ENCODE measurements at regions of chr19 and their contacts with region 1.

Region 1: GRCh38 chr19:57389730-57390598 is at the start of gene ZNF548:
- DNase-seq: peak; percentile 96
- ATAC-seq: peak; percentile 98
- H3K4me3 Mint-ChIP-seq: peak within 1 kb of the TSS; percentile 94
- H3K27ac Mint-ChIP-seq: peak within 1 kb of the TSS; percentile 91
- H3K4me1 Mint-ChIP-seq: peaks cover 34% of the 10 kb centered on the region
- H3K27me3 Mint-ChIP-seq: no peaks in the 10 kb centered on the region
- CTCF ChIP-seq: no peak
- total RNA-seq, gene ZNF548: 38.7 and 39.7 TPM in 2 replicates

Region 2: GRCh38 chr19:57191141-57192076 is 198.6 kb before region 1 on chr19 and contains the start of gene ZNF264:
- CTCF ChIA-PET with region 1: no interaction called
- POLR2A ChIA-PET with region 1: no interaction called
- intact Hi-C with region 1: loop called (anchors 1 kb)
- DNase-seq: peak; percentile 88
- ATAC-seq: peak; percentile 99
- H3K4me3 Mint-ChIP-seq: peak within 1 kb of the TSS; percentile 92
- H3K27ac Mint-ChIP-seq: peak within 1 kb of the TSS; percentile 94
- H3K4me1 Mint-ChIP-seq: peaks cover 36% of the 10 kb centered on the region
- H3K27me3 Mint-ChIP-seq: peaks cover 5% of the 10 kb centered on the region
- CTCF ChIP-seq: no peak
- total RNA-seq, gene ZNF264: 56.2 and 58.7 TPM in 2 replicates

Region 3: GRCh38 chr19:57320180-57321084 is 69.5 kb before region 1 on chr19 and contains the start of gene ZNF543:
- CTCF ChIA-PET with region 1: no interaction called
- POLR2A ChIA-PET with region 1: no interaction called
- intact Hi-C with region 1: loop called (anchors 1 kb)
- DNase-seq: peak; percentile 90
- ATAC-seq: peak; percentile 97
- H3K4me3 Mint-ChIP-seq: peak within 1 kb of the TSS; percentile 95
- H3K27ac Mint-ChIP-seq: peak within 1 kb of the TSS; percentile 98
- H3K4me1 Mint-ChIP-seq: peaks cover 30% of the 10 kb centered on the region
- H3K27me3 Mint-ChIP-seq: peaks cover 17% of the 10 kb centered on the region
- CTCF ChIP-seq: no peak
- total RNA-seq, gene ZNF543: 14.0 and 16.1 TPM in 2 replicates

Region 4: DNA sequence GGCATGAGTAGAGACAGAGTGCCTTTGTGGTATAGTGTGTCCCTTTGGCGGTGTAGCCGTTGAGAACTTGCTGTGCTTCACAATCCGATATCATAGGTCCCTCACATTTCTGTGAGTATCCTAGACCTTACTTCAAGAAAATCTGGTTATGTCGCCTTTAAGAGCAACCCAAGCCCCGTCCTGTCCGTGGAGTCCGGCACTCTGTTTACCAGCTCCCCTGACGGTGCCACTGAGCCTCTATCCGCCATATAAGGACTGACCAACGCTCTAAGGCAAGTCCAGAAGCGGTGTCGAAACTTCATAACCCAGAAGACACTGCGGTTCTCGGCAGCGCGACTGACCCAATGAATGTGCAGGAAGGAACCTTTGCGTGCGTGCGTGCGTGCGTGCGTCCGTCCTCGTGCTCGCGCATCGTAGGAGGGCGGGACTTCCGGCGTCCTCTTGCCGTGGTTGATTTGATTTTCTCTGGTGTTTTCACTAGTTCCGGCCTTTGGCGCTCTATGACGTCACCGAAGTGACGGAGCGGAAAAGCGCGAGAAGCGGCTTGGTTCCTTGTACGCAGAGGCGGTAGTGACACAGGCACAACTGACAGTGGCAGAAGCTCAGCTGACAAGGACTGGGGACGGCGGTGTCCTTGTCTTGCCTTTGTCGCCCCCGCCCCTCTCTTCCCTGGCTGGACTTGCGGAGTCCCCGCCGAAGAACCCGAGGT is 26.8 kb before region 1 on chr19 and contains the starts of genes TRAPPC2B and ZNF547:
- CTCF ChIA-PET with region 1: interaction called, 4 read pairs
- POLR2A ChIA-PET with region 1: interaction called, 22 read pairs
- intact Hi-C with region 1: loop called (anchors 1 kb)
- DNase-seq: peak; percentile 99
- ATAC-seq: peak; percentile 94
- H3K4me3 Mint-ChIP-seq: peak within 1 kb of the TSS; percentile 92
- H3K27ac Mint-ChIP-seq: peak within 1 kb of the TSS; percentile 95
- H3K4me1 Mint-ChIP-seq: peaks cover 17% of the 10 kb centered on the region
- H3K27me3 Mint-ChIP-seq: no peaks in the 10 kb centered on the region
- CTCF ChIP-seq: no peak
- total RNA-seq, gene TRAPPC2B: 9.7 and 10.2 TPM in 2 replicates
- total RNA-seq, gene ZNF547: 6.0 and 6.3 TPM in 2 replicates

Region 5: DNA sequence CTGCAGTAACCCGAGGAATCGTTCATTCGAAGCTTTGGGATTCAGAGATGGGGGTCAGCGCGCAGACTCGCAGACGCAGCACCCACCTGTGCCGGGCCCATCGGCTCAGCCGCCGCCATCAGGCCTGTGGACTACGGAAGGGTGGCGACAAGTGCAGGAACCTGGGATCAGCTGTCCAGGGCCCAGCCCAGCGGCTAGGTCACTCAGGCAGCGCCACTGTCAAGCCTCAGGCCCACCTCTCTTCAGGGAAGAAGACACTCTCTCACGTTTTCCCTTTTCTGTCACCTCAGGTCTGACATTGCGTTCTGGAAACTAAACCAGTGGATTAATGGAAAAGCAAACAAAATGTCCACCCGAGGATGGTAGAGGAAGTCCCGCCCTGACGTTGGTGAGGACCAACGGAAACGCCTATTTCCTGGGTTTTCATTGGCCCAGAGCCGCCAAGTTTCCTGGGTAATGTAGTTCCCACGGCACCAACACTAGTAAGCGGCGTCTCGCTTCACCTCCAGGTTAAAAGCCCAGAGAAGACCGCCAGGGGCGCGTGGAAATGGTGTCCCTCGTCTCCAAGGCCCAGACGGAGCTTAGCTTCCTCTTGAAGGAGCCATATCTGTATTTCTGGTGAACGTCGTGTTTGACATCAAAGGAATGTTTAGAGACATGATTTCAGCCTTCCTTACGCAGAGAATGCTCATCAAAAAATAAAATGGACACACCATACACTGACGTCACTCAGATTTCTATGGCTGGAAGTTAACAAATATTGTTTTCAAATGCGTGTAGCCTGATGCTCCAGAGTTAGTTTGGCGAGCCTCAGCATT is 87.4 kb after region 1 on chr19 and contains the start of gene ZNF772:
- CTCF ChIA-PET with region 1: no interaction called
- POLR2A ChIA-PET with region 1: interaction called, 3 read pairs
- intact Hi-C with region 1: loop called (anchors 1 kb)
- DNase-seq: peak; percentile 68
- ATAC-seq: peak; percentile 98
- H3K4me3 Mint-ChIP-seq: peak within 1 kb of the TSS; percentile 91
- H3K27ac Mint-ChIP-seq: peak within 1 kb of the TSS; percentile 90
- H3K4me1 Mint-ChIP-seq: peaks cover 29% of the 10 kb centered on the region
- H3K27me3 Mint-ChIP-seq: no peaks in the 10 kb centered on the region
- CTCF ChIP-seq: no peak
- total RNA-seq, gene ZNF772: 13.8 and 17.9 TPM in 2 replicates

Region 6: GRCh38 chr19:57583521-57584416 is 193.8 kb after region 1 on chr19 and contains the start of gene ZIK1:
- CTCF ChIA-PET with region 1: no interaction called
- POLR2A ChIA-PET with region 1: no interaction called
- intact Hi-C with region 1: loop called (anchors 1 kb)
- DNase-seq: peak; percentile 75
- ATAC-seq: peak; percentile 88
- H3K4me3 Mint-ChIP-seq: peak within 1 kb of the TSS; percentile 91
- H3K27ac Mint-ChIP-seq: peak within 1 kb of the TSS; percentile 87
- H3K4me1 Mint-ChIP-seq: peaks cover 27% of the 10 kb centered on the region
- H3K27me3 Mint-ChIP-seq: no peaks in the 10 kb centered on the region
- CTCF ChIP-seq: no peak
- total RNA-seq, gene ZIK1: 16.2 and 18.1 TPM in 2 replicates

Measured in activated B cell treated with CpG ODN at 0.5 μM for 24 hours (primary cell).